ENCODE measurements at regions of chr12 and their contacts with region 1.

Region 1: GRCh38 chr12:116277393-116278278 is at the start of gene MED13L:
- DNase-seq: peak; percentile 66 to 89
- H3K4me3 ChIP-seq: peak within 1 kb of the TSS; percentile 89
- H3K27ac ChIP-seq: peak within 1 kb of the TSS; percentile 59
- H3K4me1 ChIP-seq: peaks cover 38% of the 10 kb centered on the region
- H3K27me3 ChIP-seq: no peaks in the 10 kb centered on the region
- CTCF ChIP-seq: no peak
- total RNA-seq, gene MED13L: 89.5 and 101 TPM in 2 replicates

Region 2: GRCh38 chr12:116164250-116165035 is 113.2 kb before region 1 on chr12:
- CTCF ChIA-PET with region 1: no interaction called
- POLR2A ChIA-PET with region 1: interaction called, 22 read pairs
- intact Hi-C with region 1: no loop called
- DNase-seq: no peak
- H3K4me3 ChIP-seq: no peak overlapping the region; the same call in 1 of the 2 replicates
- H3K27ac ChIP-seq: peak overlapping the region; percentile 59
- H3K4me1 ChIP-seq: peaks cover 60% of the 10 kb centered on the region
- H3K27me3 ChIP-seq: no peaks in the 10 kb centered on the region
- CTCF ChIP-seq: no peak

Region 3: DNA sequence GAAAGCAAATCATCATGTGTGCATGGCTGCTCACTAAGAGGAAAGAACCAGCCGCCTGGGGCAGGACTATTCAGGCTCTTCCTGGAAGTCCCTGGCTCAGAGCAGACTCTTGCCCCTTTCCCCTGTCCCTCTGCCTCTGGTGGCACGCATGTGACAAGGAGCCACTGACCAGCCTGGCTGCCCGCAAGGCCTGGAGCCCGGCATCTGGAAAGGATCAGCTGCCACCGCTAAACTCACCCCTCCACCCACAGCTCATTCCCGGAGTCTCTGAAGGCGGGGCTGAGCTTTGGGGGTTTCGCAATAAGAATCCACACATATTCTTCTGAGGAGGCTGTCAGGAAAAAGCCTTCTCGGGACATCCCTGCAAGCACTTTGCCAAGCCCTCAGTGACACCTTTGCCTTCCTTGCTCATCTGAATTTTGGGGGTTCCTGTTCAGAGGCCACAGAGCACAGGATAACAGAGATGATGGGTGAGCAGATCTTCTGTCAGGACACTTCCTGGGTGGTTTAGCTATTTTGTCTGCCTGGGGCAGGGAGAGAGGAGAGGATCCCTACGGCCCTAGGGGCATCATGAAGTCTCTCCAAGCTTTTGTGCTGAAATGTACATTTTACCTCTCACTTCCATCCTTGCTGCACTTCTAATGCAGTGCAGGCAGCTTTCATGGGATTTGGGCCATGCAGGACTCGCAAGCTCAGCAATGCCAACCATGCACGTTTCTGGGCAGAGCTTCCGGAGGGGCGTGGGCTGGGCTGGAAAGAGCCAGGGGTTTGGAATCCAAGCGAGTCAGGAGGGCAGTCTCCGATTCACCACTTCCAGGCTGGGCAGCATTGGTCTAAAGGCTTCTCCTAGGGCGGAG is 156.7 kb after region 1 on chr12:
- CTCF ChIA-PET with region 1: interaction called, 6 read pairs
- POLR2A ChIA-PET with region 1: no interaction called
- intact Hi-C with region 1: loop called (anchors 1 kb)
- DNase-seq: peak; percentile 94
- H3K4me3 ChIP-seq: peak overlapping the region; percentile 42; the same call in 1 of the 2 replicates
- H3K27ac ChIP-seq: peak overlapping the region; percentile 80
- H3K4me1 ChIP-seq: peaks cover 24% of the 10 kb centered on the region
- H3K27me3 ChIP-seq: no peaks in the 10 kb centered on the region
- CTCF ChIP-seq: no peak

Region 4: GRCh38 chr12:116502952-116503542 is 225.4 kb after region 1 on chr12:
- CTCF ChIA-PET with region 1: interaction called, 8 read pairs
- POLR2A ChIA-PET with region 1: interaction called, 4 read pairs
- intact Hi-C with region 1: loop called (anchors 2 kb)
- DNase-seq: peak; percentile 76 to 100
- H3K4me3 ChIP-seq: no peak overlapping the region; the same call in 1 of the 2 replicates
- H3K27ac ChIP-seq: peak overlapping the region; percentile 90
- H3K4me1 ChIP-seq: peaks cover 17% of the 10 kb centered on the region
- H3K27me3 ChIP-seq: no peaks in the 10 kb centered on the region
- CTCF ChIP-seq: no peak

Region 5: DNA sequence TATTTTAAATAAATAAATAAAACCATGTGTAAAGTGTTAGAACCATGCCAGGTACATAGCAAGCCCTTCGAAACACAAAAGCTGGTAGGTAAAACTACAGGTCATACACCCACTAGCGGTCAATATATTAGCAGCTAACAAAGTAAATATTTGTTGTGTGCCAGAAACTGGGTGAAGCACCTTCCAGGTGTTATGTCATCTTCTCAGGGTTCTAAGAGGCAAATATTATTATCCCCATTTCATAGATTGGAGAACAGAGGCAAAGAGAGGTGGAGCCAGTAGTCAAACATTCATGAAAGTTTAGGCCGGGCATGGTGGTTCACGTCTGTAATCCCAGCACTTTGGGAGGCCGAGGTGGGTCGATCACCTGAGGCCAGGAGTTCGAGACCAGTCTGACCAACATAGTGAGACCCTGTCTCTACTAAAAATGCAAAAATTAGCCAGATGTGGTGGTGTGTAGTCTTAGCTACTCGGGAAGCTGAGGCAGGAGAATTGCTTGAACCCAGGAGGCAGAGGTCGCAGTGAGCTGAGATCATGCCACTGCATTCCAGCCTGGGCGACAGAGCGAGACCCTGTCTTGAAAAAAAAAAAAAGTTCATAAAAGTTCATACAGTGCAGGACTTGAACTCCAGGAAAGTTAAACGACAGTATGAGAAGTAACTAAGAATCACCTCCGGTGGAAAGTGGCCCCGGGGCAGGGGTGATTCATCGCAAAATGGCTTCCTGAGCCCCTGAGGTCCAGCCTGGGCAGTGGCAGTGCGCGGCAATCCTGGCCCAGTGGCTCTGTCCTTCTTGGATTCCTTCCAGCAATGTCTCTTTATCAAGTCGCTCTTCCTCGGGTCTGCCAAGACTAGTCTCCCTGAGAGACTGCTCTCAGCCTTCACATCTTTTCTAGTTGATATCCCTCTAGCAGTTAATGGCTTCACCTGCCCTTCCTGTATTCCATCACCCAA is 264.6 kb after region 1 on chr12:
- CTCF ChIA-PET with region 1: interaction called, 11 read pairs
- POLR2A ChIA-PET with region 1: no interaction called
- intact Hi-C with region 1: no loop called
- DNase-seq: peak; percentile 64 to 85
- H3K4me3 ChIP-seq: no peak overlapping the region
- H3K27ac ChIP-seq: no peak overlapping the region
- H3K4me1 ChIP-seq: peaks cover 17% of the 10 kb centered on the region
- H3K27me3 ChIP-seq: no peaks in the 10 kb centered on the region
- CTCF ChIP-seq: no peak